B cell (primary cell): ENCODE measurements at regions of chr19 and their contacts with region 1.

Region 1: GRCh38 chr19:11374433-11375142 is at the start of gene SWSAP1:
- DNase-seq: peak; percentile 99
- ATAC-seq: peak; percentile 89
- H3K4me3 ChIP-seq: peak within 1 kb of the TSS; percentile 64 to 83 (median 75)
- H3K4me3 Mint-ChIP-seq: no peak within 1 kb of the TSS
- H3K27ac ChIP-seq: peak within 1 kb of the TSS; percentile 88 to 93
- H3K27ac Mint-ChIP-seq: peak within 1 kb of the TSS; percentile 69
- H3K4me1 ChIP-seq: peaks cover 27 to 32% of the 10 kb centered on the region in 2 donors
- H3K4me1 Mint-ChIP-seq: peaks cover 14% of the 10 kb centered on the region
- H3K27me3 ChIP-seq: no peaks in the 10 kb centered on the region
- H3K27me3 Mint-ChIP-seq: no peaks in the 10 kb centered on the region
- CTCF ChIP-seq: no peak
- total RNA-seq, gene SWSAP1: 5.0 TPM in 2 replicates

Region 2: DNA sequence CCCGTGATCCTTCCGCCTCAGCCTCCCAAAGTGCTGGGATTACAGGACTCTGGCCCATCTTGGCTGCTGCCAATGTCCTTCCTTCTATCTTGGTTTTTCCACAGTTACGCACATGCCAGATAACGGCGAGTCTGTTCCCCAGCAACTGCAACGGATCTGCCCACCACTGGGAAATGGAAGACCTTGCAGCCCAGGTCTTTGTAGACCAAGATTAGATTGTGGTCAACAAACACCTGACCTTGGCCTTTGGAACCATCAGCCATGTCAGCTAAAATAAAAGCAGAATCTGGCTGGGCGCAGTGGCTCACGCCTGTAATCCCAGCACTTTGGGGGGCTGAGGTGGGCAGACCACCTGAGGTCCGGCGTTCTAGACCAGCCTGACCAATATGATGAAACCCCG is 295.7 kb before region 1 on chr19:
- CTCF ChIA-PET with region 1: no interaction called
- POLR2A ChIA-PET with region 1: no interaction called
- intact Hi-C with region 1: no loop called
- DNase-seq: no peak
- ATAC-seq: no peak
- H3K4me3 ChIP-seq: no peak overlapping the region
- H3K4me3 Mint-ChIP-seq: no peak overlapping the region
- H3K27ac ChIP-seq: no peak overlapping the region
- H3K27ac Mint-ChIP-seq: no peak overlapping the region
- H3K4me1 ChIP-seq: peaks cover 7 to 8% of the 10 kb centered on the region in 2 donors
- H3K4me1 Mint-ChIP-seq: peaks cover 10% of the 10 kb centered on the region
- H3K27me3 ChIP-seq: peaks cover 0 to 11% (median 5%) of the 10 kb centered on the region in 4 experiments
- H3K27me3 Mint-ChIP-seq: peaks cover 36% of the 10 kb centered on the region
- CTCF ChIP-seq: no peak

Region 3: DNA sequence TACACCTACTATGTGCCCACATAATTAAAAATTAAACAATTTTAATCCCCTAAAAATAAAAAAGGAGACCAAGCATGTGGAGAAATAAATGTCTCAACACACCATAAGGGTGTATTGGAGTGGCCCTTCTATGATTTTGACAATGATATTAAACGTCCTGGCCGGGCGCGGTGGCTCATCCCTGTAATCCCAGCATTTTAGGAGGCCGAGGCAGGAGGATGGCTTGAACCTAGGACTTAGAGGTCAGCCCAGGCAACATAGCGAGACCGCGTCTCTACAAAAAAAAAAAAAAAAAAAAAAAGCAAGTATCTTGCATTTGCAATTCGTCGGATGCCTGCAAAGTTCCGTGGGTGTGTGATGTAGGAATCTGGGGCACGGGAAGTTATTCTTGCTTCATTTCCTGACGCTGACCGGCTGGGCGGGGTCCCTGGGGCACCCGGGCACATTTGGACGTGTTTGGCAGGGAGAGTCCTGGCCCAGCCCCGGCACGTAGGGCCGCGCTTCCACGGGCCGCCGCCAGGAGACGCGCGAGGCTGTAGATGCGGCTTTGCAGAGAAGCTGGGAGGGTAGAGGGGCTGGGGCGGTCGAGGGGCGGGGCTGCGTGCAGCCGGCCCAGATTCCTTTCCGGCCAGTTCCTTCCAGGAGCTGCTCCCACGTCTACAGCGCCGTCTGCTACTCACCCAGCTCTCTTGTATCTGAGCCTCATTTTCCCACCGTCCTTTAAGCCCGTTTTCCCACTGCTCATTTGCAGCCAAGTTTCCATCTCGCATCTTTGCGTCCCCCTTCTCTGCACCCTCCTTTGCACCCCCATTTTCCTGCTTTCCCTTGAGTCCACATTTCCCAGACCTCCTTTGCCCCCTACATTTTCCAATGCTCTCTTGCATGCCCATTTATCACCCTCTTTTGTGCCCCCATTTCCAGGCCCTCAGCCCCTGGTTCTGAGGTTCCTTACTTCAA is 80.9 kb before region 1 on chr19:
- CTCF ChIA-PET with region 1: interaction called, 14 read pairs
- POLR2A ChIA-PET with region 1: no interaction called
- intact Hi-C with region 1: loop called (anchors 2 kb)
- DNase-seq: peak; percentile 82
- ATAC-seq: peak; percentile 99
- H3K4me3 ChIP-seq: no peak overlapping the region
- H3K4me3 Mint-ChIP-seq: peak overlapping the region; percentile 73
- H3K27ac ChIP-seq: no peak overlapping the region
- H3K27ac Mint-ChIP-seq: peak overlapping the region; percentile 63
- H3K4me1 ChIP-seq: peaks cover 0 to 10% of the 10 kb centered on the region in 2 donors
- H3K4me1 Mint-ChIP-seq: peaks cover 8% of the 10 kb centered on the region
- H3K27me3 ChIP-seq: peaks cover 0 to 14% (median 0%) of the 10 kb centered on the region in 4 experiments
- H3K27me3 Mint-ChIP-seq: peaks cover 24% of the 10 kb centered on the region
- CTCF ChIP-seq: peak; percentile 98

Region 4: GRCh38 chr19:11346092-11346940 is 28.3 kb before region 1 on chr19 and contains the starts of genes CCDC159 and TMEM205:
- CTCF ChIA-PET with region 1: no interaction called
- POLR2A ChIA-PET with region 1: interaction called, 23 read pairs
- intact Hi-C with region 1: loop called (anchors 1 kb)
- DNase-seq: peak; percentile 99
- ATAC-seq: peak; percentile 97
- H3K4me3 ChIP-seq: peak within 1 kb of the TSS; percentile 67 to 97 (median 94)
- H3K4me3 Mint-ChIP-seq: peak within 1 kb of the TSS; percentile 99
- H3K27ac ChIP-seq: peak within 1 kb of the TSS; percentile 71 to 86
- H3K27ac Mint-ChIP-seq: peak within 1 kb of the TSS; percentile 96
- H3K4me1 ChIP-seq: peaks cover 11 to 20% of the 10 kb centered on the region in 2 donors
- H3K4me1 Mint-ChIP-seq: peaks cover 28% of the 10 kb centered on the region
- H3K27me3 ChIP-seq: no peaks in the 10 kb centered on the region
- H3K27me3 Mint-ChIP-seq: no peaks in the 10 kb centered on the region
- CTCF ChIP-seq: no peak
- total RNA-seq, gene CCDC159: 56.0 and 57.5 TPM in 2 replicates
- total RNA-seq, gene TMEM205: 48.5 and 53.4 TPM in 2 replicates

Region 5: GRCh38 chr19:11422163-11423021 is 47.8 kb after region 1 on chr19:
- CTCF ChIA-PET with region 1: interaction called, 41 read pairs
- POLR2A ChIA-PET with region 1: interaction called, 13 read pairs
- intact Hi-C with region 1: no loop called
- DNase-seq: peak; percentile 92
- ATAC-seq: peak; percentile 85
- H3K4me3 ChIP-seq: peak overlapping the region in 4 of 5 experiments; percentile 40 to 57 (median 46)
- H3K4me3 Mint-ChIP-seq: peak overlapping the region; percentile 84
- H3K27ac ChIP-seq: peak overlapping the region in 1 of 2 donors; percentile 52
- H3K27ac Mint-ChIP-seq: peak overlapping the region; percentile 58
- H3K4me1 ChIP-seq: peaks cover 55 to 61% of the 10 kb centered on the region in 2 donors
- H3K4me1 Mint-ChIP-seq: peaks cover 52% of the 10 kb centered on the region
- H3K27me3 ChIP-seq: peaks cover 0 to 50% (median 24%) of the 10 kb centered on the region in 4 experiments
- H3K27me3 Mint-ChIP-seq: peaks cover 18% of the 10 kb centered on the region
- CTCF ChIP-seq: no peak

Region 6: DNA sequence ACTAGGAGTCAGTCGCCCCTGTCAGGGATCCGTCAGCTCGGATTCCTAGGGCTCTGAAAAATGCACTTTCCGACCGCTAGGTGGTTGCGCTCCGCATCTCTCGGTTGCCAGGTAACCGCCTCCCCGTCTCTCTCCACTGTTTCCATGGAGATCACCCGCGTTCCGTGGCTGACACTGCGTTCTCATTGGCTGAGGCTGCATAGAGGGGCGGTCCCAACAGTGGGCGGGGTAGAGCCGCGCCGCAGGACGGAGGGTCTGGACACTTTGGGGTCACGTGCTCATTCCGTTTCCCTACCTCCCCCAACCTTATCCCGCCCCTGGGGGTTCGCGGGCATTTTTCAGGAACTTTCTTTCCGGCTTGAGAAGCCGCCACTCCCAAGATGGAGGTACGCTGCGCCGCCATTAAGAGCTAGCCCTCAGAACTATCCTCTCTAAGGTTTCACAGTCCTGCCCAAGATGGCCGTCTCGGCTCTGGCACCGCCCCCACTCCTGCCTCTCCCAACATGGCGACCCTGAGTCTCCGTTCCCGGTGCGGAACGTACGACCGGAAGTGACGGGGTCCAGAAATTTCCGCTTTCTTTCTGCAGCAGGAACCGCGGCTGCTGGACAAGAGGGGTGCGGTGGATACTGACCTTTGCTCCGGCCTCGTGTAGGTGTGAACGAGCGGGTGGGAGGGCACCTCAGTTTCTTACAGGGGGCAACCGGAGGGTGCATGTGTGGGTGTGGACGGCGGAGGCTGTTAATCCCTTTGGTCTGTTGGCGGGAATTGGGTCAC is 60.7 kb after region 1 on chr19 and contains the starts of genes ODAD3 and PRKCSH:
- CTCF ChIA-PET with region 1: interaction called, 17 read pairs
- POLR2A ChIA-PET with region 1: interaction called, 3 read pairs
- intact Hi-C with region 1: loop called (anchors 1 kb)
- DNase-seq: peak; percentile 99
- ATAC-seq: peak; percentile 88
- H3K4me3 ChIP-seq: peak within 1 kb of the TSS; percentile 76 to 95 (median 80)
- H3K4me3 Mint-ChIP-seq: peak within 1 kb of the TSS; percentile 96
- H3K27ac ChIP-seq: peak within 1 kb of the TSS; percentile 70 to 92
- H3K27ac Mint-ChIP-seq: peak within 1 kb of the TSS; percentile 88
- H3K4me1 ChIP-seq: peaks cover 27 to 40% of the 10 kb centered on the region in 2 donors
- H3K4me1 Mint-ChIP-seq: peaks cover 29% of the 10 kb centered on the region
- H3K27me3 ChIP-seq: no peaks in the 10 kb centered on the region
- H3K27me3 Mint-ChIP-seq: no peaks in the 10 kb centered on the region
- CTCF ChIP-seq: peak; percentile 94
- total RNA-seq, gene ODAD3: 0.27 and 0.62 TPM in 2 replicates
- total RNA-seq, gene PRKCSH: 364 and 402 TPM in 2 replicates

Region 7: GRCh38 chr19:11460207-11460606 is 85.6 kb after region 1 on chr19:
- CTCF ChIA-PET with region 1: no interaction called
- POLR2A ChIA-PET with region 1: no interaction called
- intact Hi-C with region 1: no loop called
- DNase-seq: no peak
- ATAC-seq: no peak
- H3K4me3 ChIP-seq: no peak overlapping the region
- H3K4me3 Mint-ChIP-seq: no peak overlapping the region
- H3K27ac ChIP-seq: no peak overlapping the region
- H3K27ac Mint-ChIP-seq: no peak overlapping the region
- H3K4me1 ChIP-seq: no peaks in the 10 kb centered on the region
- H3K4me1 Mint-ChIP-seq: no peaks in the 10 kb centered on the region
- H3K27me3 ChIP-seq: peaks cover 0 to 11% (median 0%) of the 10 kb centered on the region in 4 experiments
- H3K27me3 Mint-ChIP-seq: no peaks in the 10 kb centered on the region
- CTCF ChIP-seq: no peak

Region 8: GRCh38 chr19:11482384-11483050 is 107.9 kb after region 1 on chr19:
- CTCF ChIA-PET with region 1: interaction called, 38 read pairs
- POLR2A ChIA-PET with region 1: interaction called, 7 read pairs
- intact Hi-C with region 1: no loop called
- DNase-seq: peak; percentile 93
- ATAC-seq: peak; percentile 79
- H3K4me3 ChIP-seq: peak overlapping the region in 4 of 5 experiments; percentile 20 to 48 (median 30)
- H3K4me3 Mint-ChIP-seq: peak overlapping the region; percentile 80
- H3K27ac ChIP-seq: no peak overlapping the region
- H3K27ac Mint-ChIP-seq: peak overlapping the region; percentile 80
- H3K4me1 ChIP-seq: peaks cover 37 to 42% of the 10 kb centered on the region in 2 donors
- H3K4me1 Mint-ChIP-seq: peaks cover 27% of the 10 kb centered on the region
- H3K27me3 ChIP-seq: peaks cover 0 to 46% (median 25%) of the 10 kb centered on the region in 4 experiments
- H3K27me3 Mint-ChIP-seq: peaks cover 34% of the 10 kb centered on the region
- CTCF ChIP-seq: peak; percentile 93